Activated CD4-positive, alpha-beta memory T cell treated with anti-CD3 and anti-CD28 coated beads for 36 hours (primary cell): ENCODE measurements at regions of chr1 and their contacts with region 1.

Region 1: GRCh38 chr1:91673613-91674012 is 173.0 kb downstream of the CDC7 start:
- DNase-seq: no peak
- H3K4me3 Mint-ChIP-seq: no peak overlapping the region
- H3K27ac Mint-ChIP-seq: no peak overlapping the region
- H3K4me1 Mint-ChIP-seq: peaks cover 37% of the 10 kb centered on the region
- H3K27me3 Mint-ChIP-seq: no peaks in the 10 kb centered on the region

Region 2: DNA sequence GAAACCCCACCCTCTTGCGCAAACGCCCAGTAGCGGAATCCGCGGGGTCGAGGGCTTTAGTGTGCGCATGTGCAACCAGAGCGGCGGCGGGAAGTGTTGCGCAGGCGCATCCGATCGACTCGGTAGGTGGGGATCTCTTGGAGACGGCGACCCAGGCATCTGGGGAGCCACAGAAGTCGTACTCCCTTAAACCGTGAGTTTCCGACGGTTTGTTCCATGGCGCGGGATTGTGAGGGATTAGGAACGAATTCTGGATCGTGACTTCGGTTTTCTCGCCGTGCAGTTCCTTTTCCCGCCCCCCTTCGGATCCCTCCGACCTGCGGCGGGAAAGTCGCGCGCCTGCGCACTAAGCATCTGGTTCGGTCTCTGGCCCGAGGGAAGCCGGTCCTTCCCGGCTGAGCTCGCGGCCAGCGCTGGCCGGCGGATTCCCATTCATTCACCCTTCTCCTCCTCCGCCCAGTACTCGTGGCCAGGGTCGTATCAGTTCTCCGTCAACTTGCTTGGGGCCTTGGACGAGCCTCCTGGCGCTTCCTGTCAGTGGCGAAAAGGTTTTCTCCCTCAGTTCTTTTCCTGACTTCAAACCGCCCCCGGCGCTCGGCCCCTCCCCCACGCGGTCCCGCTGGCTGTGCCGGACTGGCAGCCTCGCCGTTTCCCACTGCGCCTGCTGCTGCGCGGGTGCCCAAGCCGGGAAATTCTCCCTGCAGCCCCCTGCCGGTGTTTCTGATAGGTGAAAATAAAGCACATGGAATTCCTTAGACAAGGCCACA is 172.7 kb before region 1 on chr1 and contains the start of gene CDC7:
- CTCF ChIA-PET with region 1: interaction called, 3 read pairs
- POLR2A ChIA-PET with region 1: no interaction called
- intact Hi-C with region 1: loop called (anchors 2 kb)
- DNase-seq: peak; percentile 88
- H3K4me3 Mint-ChIP-seq: no peak within 1 kb of the TSS
- H3K27ac Mint-ChIP-seq: no peak within 1 kb of the TSS
- H3K4me1 Mint-ChIP-seq: peaks cover 16% of the 10 kb centered on the region
- H3K27me3 Mint-ChIP-seq: no peaks in the 10 kb centered on the region
- total RNA-seq, gene CDC7: 20.2 to 20.4 TPM

Region 3: GRCh38 chr1:91697416-91697815 is 23.8 kb after region 1 on chr1:
- CTCF ChIA-PET with region 1: interaction called, 3 read pairs
- POLR2A ChIA-PET with region 1: no interaction called
- intact Hi-C with region 1: loop called (anchors 1 kb)
- DNase-seq: peak; percentile 77
- H3K4me3 Mint-ChIP-seq: peak overlapping the region; percentile 48
- H3K27ac Mint-ChIP-seq: peak overlapping the region; percentile 54
- H3K4me1 Mint-ChIP-seq: peaks cover 31% of the 10 kb centered on the region
- H3K27me3 Mint-ChIP-seq: no peaks in the 10 kb centered on the region

Region 4: GRCh38 chr1:91712981-91713841 is 39.6 kb after region 1 on chr1:
- CTCF ChIA-PET with region 1: no interaction called
- POLR2A ChIA-PET with region 1: no interaction called
- intact Hi-C with region 1: loop called (anchors 1 kb)
- DNase-seq: peak; percentile 77
- H3K4me3 Mint-ChIP-seq: peak overlapping the region; percentile 24
- H3K27ac Mint-ChIP-seq: peak overlapping the region; percentile 71
- H3K4me1 Mint-ChIP-seq: peaks cover 25% of the 10 kb centered on the region
- H3K27me3 Mint-ChIP-seq: no peaks in the 10 kb centered on the region

Region 5: DNA sequence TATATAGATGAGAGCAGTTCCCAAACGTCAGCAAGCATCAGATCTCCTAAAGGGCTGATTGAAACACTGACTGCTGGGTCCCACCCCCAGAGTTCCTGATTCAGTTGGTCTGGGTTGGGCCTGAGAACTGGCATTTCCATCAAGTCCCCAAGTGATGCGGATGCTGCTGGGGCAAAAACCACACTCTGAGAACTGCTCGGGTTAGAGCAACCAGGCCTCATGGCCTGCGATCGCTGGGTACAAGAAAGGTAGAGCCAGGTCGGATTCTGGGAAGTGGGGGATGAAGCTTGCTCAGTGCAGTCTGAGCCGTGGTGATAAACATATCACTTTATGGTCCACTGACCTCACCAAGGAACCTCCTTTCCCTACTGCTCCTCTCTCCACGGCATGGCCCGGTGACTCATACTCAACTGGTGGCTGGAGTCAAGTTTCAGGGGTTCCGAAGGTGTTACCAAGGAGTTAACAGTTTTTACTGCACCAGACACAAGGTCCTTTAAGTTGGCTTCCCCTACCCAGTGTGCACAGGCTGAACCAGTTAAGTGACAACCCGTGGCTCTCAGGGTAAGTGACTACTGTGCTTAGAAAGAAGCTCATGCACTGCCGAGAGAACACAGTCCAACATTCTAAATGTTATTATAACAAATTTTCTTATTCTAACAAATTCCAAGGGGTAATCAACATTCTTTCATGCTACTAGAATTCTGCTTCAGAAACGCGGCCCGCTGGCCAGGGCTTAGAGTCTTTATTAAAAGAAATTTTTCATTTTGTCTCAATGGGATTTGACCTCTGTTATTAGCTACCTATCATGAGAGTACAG is 58.9 kb after region 1 on chr1:
- CTCF ChIA-PET with region 1: no interaction called
- POLR2A ChIA-PET with region 1: no interaction called
- intact Hi-C with region 1: loop called (anchors 2 kb)
- DNase-seq: peak; percentile 65
- H3K4me3 Mint-ChIP-seq: peak overlapping the region; percentile 24
- H3K27ac Mint-ChIP-seq: peak overlapping the region; percentile 29
- H3K4me1 Mint-ChIP-seq: peaks cover 50% of the 10 kb centered on the region
- H3K27me3 Mint-ChIP-seq: no peaks in the 10 kb centered on the region